Activated CD4-positive, alpha-beta memory T cell treated with anti-CD3 and anti-CD28 coated beads for 36 hours (primary cell): ENCODE measurements at regions of chr14 and their contacts with region 1.

Region 1: GRCh38 chr14:106691601-106692291 is 1165.4 kb downstream of the TMEM121 start:
- DNase-seq: peak; percentile 93
- H3K4me3 Mint-ChIP-seq: no peak overlapping the region
- H3K27ac Mint-ChIP-seq: no peak overlapping the region
- H3K4me1 Mint-ChIP-seq: peaks cover 11% of the 10 kb centered on the region
- H3K27me3 Mint-ChIP-seq: peaks cover 3% of the 10 kb centered on the region

Region 2: DNA sequence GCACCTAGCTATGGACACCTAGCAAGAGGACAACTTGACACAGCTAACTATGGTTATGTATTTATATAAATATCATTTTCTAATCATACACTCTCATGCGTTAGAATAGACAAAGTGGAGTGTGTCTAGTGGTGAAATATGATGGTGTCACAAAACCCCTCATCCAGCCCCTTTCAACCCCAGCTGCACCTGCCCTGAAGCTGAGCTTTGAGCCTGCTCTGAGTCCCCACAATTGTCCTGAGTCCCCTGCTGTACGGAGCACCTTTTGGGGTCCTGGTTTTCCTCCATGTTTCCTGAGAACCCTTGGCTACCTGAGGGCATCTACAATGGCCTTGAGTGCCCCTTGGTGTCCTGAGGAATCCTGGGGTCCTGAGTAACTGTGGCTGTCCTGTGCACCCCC is 92.5 kb before region 1 on chr14:
- CTCF ChIA-PET with region 1: no interaction called
- POLR2A ChIA-PET with region 1: no interaction called
- intact Hi-C with region 1: no loop called
- DNase-seq: no peak
- H3K4me3 Mint-ChIP-seq: no peak overlapping the region
- H3K27ac Mint-ChIP-seq: no peak overlapping the region
- H3K4me1 Mint-ChIP-seq: no peaks in the 10 kb centered on the region
- H3K27me3 Mint-ChIP-seq: peaks cover 45% of the 10 kb centered on the region

Region 3: DNA sequence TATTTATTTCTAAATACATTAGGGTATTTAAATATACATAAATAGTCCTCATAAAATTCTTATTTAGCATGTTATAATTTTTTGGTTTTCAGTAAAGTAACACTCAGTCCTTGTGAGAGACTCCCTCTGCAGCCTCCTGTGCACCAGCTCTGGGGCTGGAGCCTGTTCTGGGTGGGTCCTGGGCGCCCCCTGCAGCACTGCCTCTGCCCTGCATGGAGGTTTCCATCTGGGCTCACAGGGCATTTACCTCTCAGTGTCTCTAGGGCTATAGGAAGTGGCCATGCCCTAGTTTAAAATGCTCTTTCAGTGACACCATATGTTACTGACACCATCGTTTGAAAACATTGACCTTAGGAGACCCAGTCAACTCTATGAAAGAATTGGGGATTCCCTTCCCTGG is 10.2 kb before region 1 on chr14:
- CTCF ChIA-PET with region 1: interaction called, 21 read pairs
- POLR2A ChIA-PET with region 1: no interaction called
- intact Hi-C with region 1: no loop called
- DNase-seq: no peak
- H3K4me3 Mint-ChIP-seq: no peak overlapping the region
- H3K27ac Mint-ChIP-seq: no peak overlapping the region
- H3K4me1 Mint-ChIP-seq: no peaks in the 10 kb centered on the region
- H3K27me3 Mint-ChIP-seq: peaks cover 19% of the 10 kb centered on the region

Region 4: DNA sequence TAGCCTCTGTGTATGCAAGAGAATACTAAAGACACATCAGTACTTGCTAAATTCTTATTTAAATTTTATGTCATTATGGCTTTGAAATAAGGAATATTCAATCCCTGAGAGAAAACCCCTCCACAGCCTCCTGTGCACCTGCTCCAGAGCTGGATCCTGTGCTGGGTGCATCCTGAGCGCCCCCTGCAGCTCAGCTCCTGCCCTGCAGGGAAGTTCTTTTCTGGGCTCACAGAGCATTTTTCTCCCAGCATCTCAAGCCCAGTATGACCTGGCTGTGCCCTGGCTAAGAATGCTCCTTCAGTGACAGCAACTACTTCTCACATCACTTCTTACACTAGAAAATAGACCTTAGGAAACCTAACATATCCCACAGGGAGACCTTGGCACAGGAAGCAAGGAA is 46.3 kb after region 1 on chr14:
- CTCF ChIA-PET with region 1: interaction called, 31 read pairs
- POLR2A ChIA-PET with region 1: no interaction called
- intact Hi-C with region 1: no loop called
- DNase-seq: peak; percentile 43
- H3K4me3 Mint-ChIP-seq: no peak overlapping the region
- H3K27ac Mint-ChIP-seq: no peak overlapping the region
- H3K4me1 Mint-ChIP-seq: peaks cover 8% of the 10 kb centered on the region
- H3K27me3 Mint-ChIP-seq: no peaks in the 10 kb centered on the region